Spleen (tissue), 13 donors: ENCODE measurements at regions of chr5 and their contacts with region 1.

Region 1: DNA sequence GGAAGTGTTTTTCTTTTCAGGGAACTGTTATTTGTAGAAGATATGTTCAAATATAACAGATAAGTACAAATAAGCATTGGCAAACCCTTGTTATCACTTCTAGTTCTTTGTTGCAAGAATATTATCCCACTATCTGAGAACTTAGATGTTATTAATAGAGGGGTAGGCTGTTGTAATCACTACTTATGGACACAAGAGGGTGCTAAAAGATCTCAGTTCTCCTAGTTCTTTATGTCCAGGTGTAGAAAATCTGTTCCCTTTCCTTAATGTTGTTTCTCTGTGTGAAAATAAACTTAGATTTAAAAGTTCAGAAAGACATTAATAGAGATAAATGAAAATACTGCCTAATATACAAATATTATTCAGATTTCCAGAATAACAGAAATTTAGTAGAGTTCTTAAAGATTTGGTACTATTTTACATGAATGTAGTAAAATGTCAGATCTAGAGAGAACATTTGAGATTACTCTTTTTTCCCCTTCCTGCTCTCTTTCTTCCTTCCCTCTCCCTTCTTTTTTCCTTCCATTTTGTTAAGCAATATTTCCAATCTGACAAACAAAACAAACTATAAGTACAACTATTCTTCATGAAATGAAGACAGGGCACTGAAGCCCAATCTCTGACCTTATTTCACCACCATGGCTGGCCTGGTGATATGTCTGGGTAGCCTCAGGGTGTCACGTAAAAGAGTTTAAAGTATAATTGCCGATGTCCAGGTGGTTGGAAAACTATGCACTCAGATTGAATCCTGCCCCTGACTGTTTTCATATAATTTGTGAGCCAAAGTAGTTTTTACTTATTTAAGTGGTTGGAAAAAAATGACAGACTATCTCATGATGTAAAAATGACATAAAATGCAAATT is 43.6 kb upstream of the C5orf46 start:
- DNase-seq: no peak
- H3K4me3 ChIP-seq: no peak overlapping the region
- H3K27ac ChIP-seq: no peak overlapping the region
- H3K4me1 ChIP-seq: no peaks in the 10 kb centered on the region
- H3K27me3 ChIP-seq: no peaks in the 10 kb centered on the region
- CTCF ChIP-seq: peak in 10 of 11 experiments; percentile 21 to 62 (median 54)
- POLR2A ChIP-seq: no peak

Region 2: DNA sequence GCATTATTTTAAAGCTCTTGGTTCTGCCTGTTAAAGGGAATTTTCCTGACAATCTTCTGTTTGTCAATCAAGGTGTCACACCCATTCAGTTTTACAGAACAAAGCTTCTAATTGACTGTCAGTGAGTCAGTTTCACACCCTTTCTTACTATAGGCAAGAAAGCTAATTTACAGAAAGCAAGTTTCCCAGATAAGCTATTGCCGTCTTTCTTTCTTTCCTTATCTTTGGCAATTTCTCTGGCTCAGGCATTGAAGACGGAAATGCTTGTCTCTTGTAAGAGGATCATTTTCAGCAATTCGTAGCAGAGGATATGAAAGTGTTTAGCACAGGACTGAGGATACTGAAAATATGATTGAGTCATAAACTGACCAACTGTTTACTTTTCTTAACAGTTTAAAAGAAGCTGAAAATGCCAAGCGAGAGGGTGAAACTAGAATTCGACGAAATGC is 140.9 kb after region 1 on chr5:
- intact Hi-C with region 1: no loop called
- DNase-seq: no peak
- H3K4me3 ChIP-seq: no peak overlapping the region
- H3K27ac ChIP-seq: no peak overlapping the region
- H3K4me1 ChIP-seq: no peaks in the 10 kb centered on the region
- H3K27me3 ChIP-seq: no peaks in the 10 kb centered on the region
- CTCF ChIP-seq: no peak
- POLR2A ChIP-seq: no peak

Region 3: GRCh38 chr5:148107608-148108007 is 157.7 kb after region 1 on chr5:
- intact Hi-C with region 1: loop called (anchors 10 kb)
- DNase-seq: no peak
- H3K4me3 ChIP-seq: no peak overlapping the region
- H3K27ac ChIP-seq: no peak overlapping the region
- H3K4me1 ChIP-seq: no peaks in the 10 kb centered on the region
- H3K27me3 ChIP-seq: no peaks in the 10 kb centered on the region
- CTCF ChIP-seq: no peak
- POLR2A ChIP-seq: no peak